Activated CD8-positive, alpha-beta memory T cell treated with anti-CD3 and anti-CD28 coated beads, Interleukin-2, amount 10 ng/mL, durations not matched to agents 7 days and 5 days (primary cell): ENCODE measurements at regions of chr2 and their contacts with region 1.

Region 1: DNA sequence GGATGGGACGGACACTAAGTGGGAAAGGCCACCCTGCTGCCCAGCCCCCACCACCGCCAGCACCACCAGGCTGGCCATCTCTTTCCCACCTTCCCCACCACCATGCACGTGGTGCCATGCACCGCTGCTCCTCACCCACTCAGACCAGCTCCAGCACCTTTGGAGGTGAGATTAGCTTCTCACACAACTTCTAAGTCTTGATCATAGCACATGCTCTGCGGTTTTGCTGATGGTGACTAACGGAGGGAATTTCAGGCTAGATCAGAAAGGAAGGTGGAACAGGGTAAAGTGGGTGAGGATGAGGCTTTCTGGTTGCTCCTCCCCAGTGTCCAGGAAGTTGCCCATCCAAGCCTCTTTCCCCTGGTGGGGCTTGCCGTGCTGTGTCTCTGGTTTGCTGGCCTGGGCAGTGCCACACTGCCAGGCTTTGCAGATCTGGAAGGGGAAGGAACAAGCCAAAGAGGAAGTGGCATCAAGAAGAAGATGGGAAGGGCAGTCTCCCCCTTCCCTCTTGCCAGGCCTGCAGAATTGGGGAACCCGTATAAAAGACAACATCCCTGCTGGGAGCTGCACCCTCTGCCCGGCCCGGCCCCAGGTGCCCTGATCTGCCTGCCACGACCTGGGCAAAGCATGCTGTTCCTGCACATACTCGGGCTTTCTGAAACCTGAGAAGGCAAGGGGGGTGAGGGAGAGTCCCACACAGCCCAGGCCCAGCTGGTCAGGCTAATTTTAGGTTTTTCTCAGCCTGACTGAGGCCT is 44.3 kb upstream of the CAB39 start:
- DNase-seq: peak; percentile 58
- ATAC-seq: peak; percentile 17
- H3K4me3 Mint-ChIP-seq: no peak overlapping the region
- H3K27ac Mint-ChIP-seq: peak overlapping the region; percentile 86
- H3K4me1 Mint-ChIP-seq: peaks cover 75% of the 10 kb centered on the region
- H3K27me3 Mint-ChIP-seq: no peaks in the 10 kb centered on the region

Region 2: DNA sequence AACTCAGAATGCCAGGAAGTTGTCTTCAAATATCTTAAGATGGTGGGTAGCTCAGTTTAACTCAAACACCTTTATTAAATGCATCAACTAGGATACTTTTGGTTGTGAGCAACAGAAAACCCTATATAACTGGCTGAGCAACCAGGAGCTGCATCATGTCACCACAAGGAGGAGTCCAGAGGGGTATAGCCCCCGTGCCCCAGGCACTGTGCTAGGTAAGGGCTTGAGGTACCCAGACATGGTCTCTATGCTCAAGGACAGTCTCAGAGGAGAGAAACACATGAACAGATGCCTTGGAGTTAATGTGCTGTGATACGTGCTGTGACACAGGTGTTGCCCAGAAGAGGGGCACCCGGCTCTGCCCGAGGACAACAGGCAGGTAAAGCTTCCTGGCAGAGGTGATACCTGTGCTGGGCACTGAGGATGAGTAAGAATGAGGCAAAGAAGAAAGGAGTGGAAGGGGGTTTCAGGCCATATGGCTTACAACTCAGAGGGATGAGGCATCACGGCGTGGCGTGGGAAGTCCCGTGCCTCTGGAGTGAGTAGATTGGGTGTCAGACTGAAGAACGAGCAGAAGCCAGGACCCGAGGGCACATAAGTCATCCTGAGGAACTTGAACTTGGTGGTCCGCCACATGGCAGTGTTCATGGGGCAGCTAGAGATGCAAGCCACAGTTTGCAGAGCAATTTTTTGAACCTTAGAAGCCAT is 12.3 kb after region 1 on chr2:
- CTCF ChIA-PET with region 1: interaction called, 19 read pairs
- DNase-seq: no peak
- ATAC-seq: no peak
- H3K4me3 Mint-ChIP-seq: no peak overlapping the region
- H3K27ac Mint-ChIP-seq: no peak overlapping the region
- H3K4me1 Mint-ChIP-seq: peaks cover 52% of the 10 kb centered on the region
- H3K27me3 Mint-ChIP-seq: no peaks in the 10 kb centered on the region

Region 3: GRCh38 chr2:230691005-230691647 is 22.8 kb after region 1 on chr2:
- CTCF ChIA-PET with region 1: no interaction called
- DNase-seq: no peak
- ATAC-seq: no peak
- H3K4me3 Mint-ChIP-seq: no peak overlapping the region
- H3K27ac Mint-ChIP-seq: no peak overlapping the region
- H3K4me1 Mint-ChIP-seq: peaks cover 24% of the 10 kb centered on the region
- H3K27me3 Mint-ChIP-seq: no peaks in the 10 kb centered on the region